ENCODE measurements at regions of chr20 and their contacts with region 1.

Region 1: GRCh38 chr20:35664544-35665221 is at the starts of genes CPNE1 and RBM12:
- DNase-seq: peak; percentile 97
- total RNA-seq, gene CPNE1: 77.9 TPM
- total RNA-seq, gene RBM12: 44.4 TPM

Region 2: DNA sequence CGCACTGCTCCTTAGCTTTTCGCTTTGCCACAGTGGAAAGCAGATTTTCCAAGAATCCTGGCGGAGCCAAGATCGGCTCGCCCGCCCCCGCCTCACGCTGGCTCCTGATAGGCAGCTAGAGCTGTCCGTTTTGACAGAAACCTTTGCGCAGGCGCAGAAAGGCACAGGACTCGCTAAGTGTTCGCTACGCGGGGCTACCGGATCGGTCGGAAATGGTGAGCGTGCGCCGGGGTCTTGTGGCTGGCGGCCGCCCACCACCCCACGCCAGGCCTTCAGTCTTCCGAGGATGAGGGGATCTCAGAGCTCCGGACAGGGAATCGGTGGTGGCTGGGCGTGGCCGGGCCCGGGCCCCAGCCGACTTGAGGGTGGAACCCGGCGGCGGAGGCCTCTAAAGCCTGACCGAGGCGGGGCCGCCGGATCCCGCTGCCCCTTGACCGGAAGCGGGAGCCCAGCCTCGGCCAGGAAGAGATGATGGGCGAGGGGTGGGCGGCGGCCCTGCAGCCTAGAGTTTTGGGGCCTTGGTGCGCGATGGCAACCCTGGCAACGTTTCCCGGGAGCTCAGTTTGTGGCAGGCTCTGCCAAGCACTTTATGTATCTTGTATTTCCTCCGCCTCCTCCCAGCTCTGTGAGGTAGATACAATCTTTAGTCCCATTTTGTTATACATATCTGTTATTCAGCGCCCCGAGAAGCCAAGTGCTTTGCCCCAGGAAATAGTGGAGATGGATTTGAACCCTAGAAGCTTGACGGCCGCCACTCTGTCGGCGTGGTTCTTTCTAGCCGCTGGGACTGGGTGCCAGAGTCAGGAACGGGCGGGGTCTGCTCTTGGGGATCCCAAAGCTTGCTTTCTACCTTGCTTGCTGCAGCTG is 1148.2 kb before region 1 on chr20 and contains the start of gene DYNLRB1:
- intact Hi-C with region 1: no loop called
- DNase-seq: peak; percentile 98
- total RNA-seq, gene DYNLRB1: 157 TPM

Region 3: GRCh38 chr20:35541783-35542588 is 122.7 kb before region 1 on chr20 and contains the start of gene ERGIC3:
- intact Hi-C with region 1: no loop called
- DNase-seq: peak; percentile 99
- total RNA-seq, gene ERGIC3: 91.2 TPM

Region 4: GRCh38 chr20:35575970-35576623 is 88.6 kb before region 1 on chr20:
- intact Hi-C with region 1: no loop called
- DNase-seq: no peak

Region 5: DNA sequence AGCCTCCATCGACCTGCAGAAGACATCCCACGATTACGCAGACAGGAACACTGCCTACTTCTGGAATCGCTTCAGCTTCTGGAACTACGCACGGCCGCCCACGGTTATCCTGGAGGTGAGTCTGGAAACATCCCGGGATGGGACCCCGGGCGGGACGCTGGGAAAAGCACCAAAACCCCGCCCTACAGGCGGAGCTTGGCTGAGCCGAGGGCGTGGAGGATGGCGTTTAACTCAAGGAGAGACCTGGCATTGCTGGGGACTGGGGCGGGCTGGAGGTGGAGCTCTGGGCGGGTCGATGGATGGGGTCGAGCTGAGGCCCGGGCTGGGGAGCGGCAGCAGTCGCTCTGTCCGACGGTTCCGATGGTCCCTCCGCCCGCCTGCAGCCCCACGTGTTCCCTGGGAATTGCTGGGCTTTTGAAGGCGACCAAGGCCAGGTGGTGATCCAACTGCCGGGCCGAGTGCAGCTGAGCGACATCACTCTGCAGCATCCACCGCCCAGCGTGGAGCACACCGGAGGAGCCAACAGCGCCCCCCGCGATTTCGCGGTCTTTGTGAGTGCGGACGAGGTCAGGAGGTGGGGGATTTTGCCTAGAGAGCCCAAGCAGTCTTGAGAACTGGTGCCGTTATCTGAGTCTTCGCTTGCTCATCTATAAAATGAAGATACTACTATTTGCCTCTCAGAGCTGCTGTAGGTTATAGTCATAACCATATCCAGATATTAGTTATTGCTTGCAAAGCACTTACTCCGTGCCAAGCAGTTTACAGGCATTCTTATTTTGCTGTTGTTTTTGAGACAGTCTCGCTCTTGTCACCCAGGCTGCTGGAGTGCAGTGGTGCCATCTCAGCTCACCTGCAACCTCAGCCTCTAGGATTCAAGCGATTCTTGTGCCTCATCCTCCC is 45.2 kb before region 1 on chr20:
- intact Hi-C with region 1: loop called (anchors 2 kb)
- DNase-seq: peak; percentile 89

Region 6: DNA sequence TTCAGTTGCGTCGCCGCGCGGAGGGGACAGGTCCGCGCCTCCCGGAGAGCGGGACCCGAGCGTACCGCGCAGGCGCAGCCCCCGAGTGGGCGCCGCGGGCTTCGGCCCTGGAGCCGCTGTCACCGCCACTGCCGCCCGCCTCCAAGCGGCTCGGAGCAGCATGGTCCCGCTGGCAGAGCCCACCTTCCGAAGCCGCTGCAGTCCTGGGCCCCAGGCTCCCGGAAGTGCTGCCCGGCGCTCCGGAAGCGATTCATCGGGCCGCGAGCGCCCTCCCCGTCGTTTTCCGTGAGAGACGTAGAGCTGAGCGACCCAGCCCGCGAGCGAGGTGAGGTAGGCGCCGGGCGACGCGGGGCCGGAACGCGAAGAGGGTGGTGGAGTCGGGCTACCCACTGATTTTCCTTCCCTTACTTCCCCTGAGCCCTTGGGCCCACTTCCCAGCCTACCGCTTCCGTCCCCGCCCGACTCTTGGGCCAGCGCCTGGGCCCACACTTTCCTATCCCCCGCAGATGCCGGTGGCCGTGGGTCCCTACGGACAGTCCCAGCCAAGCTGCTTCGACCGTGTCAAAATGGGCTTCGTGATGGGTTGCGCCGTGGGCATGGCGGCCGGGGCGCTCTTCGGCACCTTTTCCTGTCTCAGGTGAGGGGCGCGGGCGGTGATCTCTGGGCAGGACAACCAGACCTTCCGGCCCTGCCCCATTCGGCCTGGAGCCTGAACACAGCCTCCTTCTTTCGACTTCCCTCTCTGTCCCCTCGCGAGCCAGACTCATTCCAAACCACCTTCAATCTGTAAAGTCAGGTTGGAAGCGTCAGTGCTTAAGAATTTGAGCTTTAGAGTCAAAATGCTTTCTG is 34.7 kb after region 1 on chr20 and contains the starts of genes NFS1 and ROMO1:
- intact Hi-C with region 1: loop called (anchors 2 kb)
- DNase-seq: peak; percentile 94
- total RNA-seq, gene NFS1: 55.0 TPM
- total RNA-seq, gene ROMO1: 176 TPM

Region 7: GRCh38 chr20:35768731-35769664 is 104.3 kb after region 1 on chr20:
- intact Hi-C with region 1: no loop called
- DNase-seq: peak; percentile 96